Activated T-helper 2 cell treated with anti-CD3 and anti-CD28 coated beads, Interferon-gamma antibody, Interleukin-2, Interleukin-4, amounts not matched to agents 10 μg/mL and 5 μg/mL and 100 μg/mL, durations not matched to agents 14 hours and 24 hours and 36 hours (primary cell): ENCODE measurements at regions of chr1 and their contacts with region 1.

Region 1: GRCh38 chr1:154558575-154559465 is at the start of gene UBE2Q1:
- DNase-seq: peak; percentile 99
- H3K4me3 Mint-ChIP-seq: peak within 1 kb of the TSS; percentile 90
- H3K27ac Mint-ChIP-seq: peak within 1 kb of the TSS; percentile 87
- H3K4me1 Mint-ChIP-seq: peaks cover 22% of the 10 kb centered on the region
- H3K27me3 Mint-ChIP-seq: no peaks in the 10 kb centered on the region
- total RNA-seq, gene UBE2Q1: 96.5 and 101 TPM in 2 replicates

Region 2: GRCh38 chr1:154183045-154183915 is 375.5 kb before region 1 on chr1:
- intact Hi-C with region 1: loop called (anchors 1 kb)
- DNase-seq: peak; percentile 93
- H3K4me3 Mint-ChIP-seq: peak overlapping the region; percentile 99
- H3K27ac Mint-ChIP-seq: peak overlapping the region; percentile 98
- H3K4me1 Mint-ChIP-seq: peaks cover 43% of the 10 kb centered on the region
- H3K27me3 Mint-ChIP-seq: peaks cover 3% of the 10 kb centered on the region

Region 3: GRCh38 chr1:154324669-154325582 is 233.9 kb before region 1 on chr1 and contains the start of gene ATP8B2:
- intact Hi-C with region 1: loop called (anchors 5 kb)
- DNase-seq: peak; percentile 77
- H3K4me3 Mint-ChIP-seq: peak within 1 kb of the TSS; percentile 95
- H3K27ac Mint-ChIP-seq: peak within 1 kb of the TSS; percentile 89
- H3K4me1 Mint-ChIP-seq: peaks cover 33% of the 10 kb centered on the region
- H3K27me3 Mint-ChIP-seq: peaks cover 18% of the 10 kb centered on the region
- total RNA-seq, gene ATP8B2: 44.0 and 47.0 TPM in 2 replicates

Region 4: DNA sequence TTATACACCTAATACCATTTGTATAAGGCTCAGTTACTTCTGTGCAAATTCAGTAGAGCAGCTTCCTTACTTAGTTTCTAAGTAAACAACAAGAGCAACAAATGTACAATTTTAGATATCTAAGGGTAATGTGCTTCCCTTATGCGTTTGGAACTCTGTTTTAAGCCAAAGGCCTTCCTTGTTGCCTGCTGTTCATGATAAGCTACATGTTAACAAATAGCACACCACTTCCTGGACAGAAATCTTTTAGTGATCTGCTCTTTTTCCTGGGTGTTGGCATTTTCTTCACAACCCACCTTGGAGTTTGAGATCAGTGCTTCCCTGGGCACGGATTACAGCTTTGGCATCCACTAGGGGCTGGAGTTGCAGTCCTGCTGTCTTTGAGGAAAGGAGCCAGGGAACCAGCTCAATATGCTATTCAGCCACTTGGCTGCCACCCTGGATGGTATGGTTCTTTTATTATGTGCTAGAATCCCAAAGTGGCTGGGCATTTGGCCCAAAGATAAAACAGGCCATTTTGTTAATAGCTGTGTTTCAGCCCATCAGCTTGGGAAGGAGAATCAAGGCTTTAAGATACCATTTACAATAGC is 104.7 kb after region 1 on chr1:
- intact Hi-C with region 1: loop called (anchors 5 kb)
- DNase-seq: no peak
- H3K4me3 Mint-ChIP-seq: no peak overlapping the region
- H3K27ac Mint-ChIP-seq: no peak overlapping the region
- H3K4me1 Mint-ChIP-seq: peaks cover 2% of the 10 kb centered on the region
- H3K27me3 Mint-ChIP-seq: peaks cover 33% of the 10 kb centered on the region

Region 5: GRCh38 chr1:154837672-154838171 is 278.9 kb after region 1 on chr1:
- intact Hi-C with region 1: no loop called
- DNase-seq: no peak
- H3K4me3 Mint-ChIP-seq: no peak overlapping the region
- H3K27ac Mint-ChIP-seq: no peak overlapping the region
- H3K4me1 Mint-ChIP-seq: no peaks in the 10 kb centered on the region
- H3K27me3 Mint-ChIP-seq: peaks cover 3% of the 10 kb centered on the region

Region 6: DNA sequence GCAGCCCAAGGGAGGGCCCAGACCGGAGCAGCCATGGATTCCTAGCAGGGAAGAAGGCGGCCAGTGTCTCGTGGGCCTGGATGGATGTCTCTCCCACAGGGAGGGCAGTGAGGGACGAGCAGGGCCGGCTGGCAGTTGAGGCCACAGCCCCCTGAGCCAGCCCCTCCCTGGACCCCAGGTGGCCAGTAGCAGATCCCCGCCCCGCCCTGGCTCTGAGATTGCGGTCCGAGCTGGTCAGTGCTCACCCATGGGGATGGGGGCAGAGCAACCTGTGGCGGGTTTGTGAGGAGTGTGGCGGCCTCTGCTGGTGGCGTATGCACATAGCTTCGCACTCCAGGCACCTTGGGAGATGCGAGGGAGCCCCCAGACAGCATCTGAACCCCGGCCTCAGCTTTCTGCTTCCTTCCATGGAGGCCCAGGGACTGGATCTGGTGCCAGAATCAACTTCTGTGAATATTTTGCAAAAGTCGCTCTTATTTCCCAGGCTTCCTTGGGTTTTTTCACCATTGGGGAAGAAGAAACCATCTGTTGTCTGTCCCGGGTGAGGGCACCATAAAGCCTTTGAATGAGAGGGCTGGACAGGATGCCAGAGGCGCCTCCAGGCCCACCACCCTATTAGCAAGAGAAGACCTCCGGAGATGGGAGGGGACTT is 319.7 kb after region 1 on chr1:
- intact Hi-C with region 1: loop called (anchors 2 kb)
- DNase-seq: peak; percentile 63
- H3K4me3 Mint-ChIP-seq: no peak overlapping the region
- H3K27ac Mint-ChIP-seq: no peak overlapping the region
- H3K4me1 Mint-ChIP-seq: peaks cover 9% of the 10 kb centered on the region
- H3K27me3 Mint-ChIP-seq: no peaks in the 10 kb centered on the region

Region 7: DNA sequence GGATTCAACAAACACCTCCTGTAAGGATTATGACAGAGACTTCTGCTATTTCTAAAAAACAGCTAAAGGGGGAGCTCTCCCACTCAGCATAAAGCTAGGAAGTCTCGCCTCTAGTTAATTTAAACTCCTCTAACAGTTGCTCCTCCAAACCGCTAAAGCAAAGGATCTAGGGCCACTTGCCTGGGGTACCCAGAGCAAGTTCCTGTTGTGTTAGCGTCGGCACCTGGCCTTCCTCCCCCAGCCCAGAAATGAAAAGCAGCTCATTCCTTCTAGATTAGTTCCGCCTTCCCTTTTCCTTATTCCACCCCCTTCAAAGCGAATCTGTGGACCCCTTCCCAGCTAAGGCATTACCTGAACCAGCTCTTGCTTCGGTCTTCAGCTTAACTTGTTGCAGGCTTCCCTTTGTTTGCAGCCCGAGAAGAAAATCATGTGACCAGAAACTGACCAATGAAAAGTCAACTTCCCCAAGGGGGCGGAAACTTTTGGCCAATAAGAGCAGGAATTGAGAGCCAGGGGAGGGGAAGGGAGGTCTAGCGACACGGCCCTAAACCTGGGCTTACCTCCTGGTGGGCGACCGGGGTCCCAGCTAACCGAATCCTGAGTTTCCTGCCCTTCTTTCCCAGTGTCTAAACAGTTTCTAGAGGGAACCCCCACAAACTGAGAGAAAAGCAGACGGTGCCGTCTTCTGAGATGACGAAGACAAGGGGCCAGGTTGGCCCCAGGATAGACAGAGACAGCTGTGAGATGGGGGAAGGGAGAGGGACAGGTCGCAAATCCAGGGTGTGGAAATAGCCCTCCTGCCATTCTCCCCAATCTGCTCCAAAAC is 397.1 kb after region 1 on chr1 and contains the start of gene PBXIP1:
- intact Hi-C with region 1: loop called (anchors 5 kb)
- DNase-seq: peak; percentile 86
- H3K4me3 Mint-ChIP-seq: peak within 1 kb of the TSS; percentile 95
- H3K27ac Mint-ChIP-seq: peak within 1 kb of the TSS; percentile 99
- H3K4me1 Mint-ChIP-seq: peaks cover 58% of the 10 kb centered on the region
- H3K27me3 Mint-ChIP-seq: no peaks in the 10 kb centered on the region
- total RNA-seq, gene PBXIP1: 23.6 and 25.3 TPM in 2 replicates

Region 8: GRCh38 chr1:155001675-155002463 is 443.0 kb after region 1 on chr1:
- intact Hi-C with region 1: loop called (anchors 5 kb)
- DNase-seq: peak; percentile 98
- H3K4me3 Mint-ChIP-seq: peak overlapping the region; percentile 97
- H3K27ac Mint-ChIP-seq: peak overlapping the region; percentile 97
- H3K4me1 Mint-ChIP-seq: peaks cover 47% of the 10 kb centered on the region
- H3K27me3 Mint-ChIP-seq: no peaks in the 10 kb centered on the region